CD14-positive monocyte (primary cell): ENCODE measurements at regions of chr21 and their contacts with region 1.

Region 1: GRCh38 chr21:32770871-32771523 is 558 bp downstream of the PAXBP1 start:
- DNase-seq: peak; percentile 51 to 71 (median 53)
- H3K4me3 ChIP-seq: peak overlapping the region; percentile 43 to 88 (median 86)
- H3K4me3 Mint-ChIP-seq: peak overlapping the region; percentile 98 to 100
- H3K27ac ChIP-seq: peak overlapping the region; percentile 89 to 91
- H3K27ac Mint-ChIP-seq: peak overlapping the region; percentile 89 to 98 (median 95)
- H3K4me1 ChIP-seq: peaks cover 24 to 31% of the 10 kb centered on the region in 2 donors
- H3K4me1 Mint-ChIP-seq: peaks cover 44% of the 10 kb centered on the region
- H3K27me3 ChIP-seq: no peaks in the 10 kb centered on the region
- H3K27me3 Mint-ChIP-seq: peaks cover 0 to 7% (median 5%) of the 10 kb centered on the region in 3 donors
- CTCF ChIP-seq: no peak

Region 2: DNA sequence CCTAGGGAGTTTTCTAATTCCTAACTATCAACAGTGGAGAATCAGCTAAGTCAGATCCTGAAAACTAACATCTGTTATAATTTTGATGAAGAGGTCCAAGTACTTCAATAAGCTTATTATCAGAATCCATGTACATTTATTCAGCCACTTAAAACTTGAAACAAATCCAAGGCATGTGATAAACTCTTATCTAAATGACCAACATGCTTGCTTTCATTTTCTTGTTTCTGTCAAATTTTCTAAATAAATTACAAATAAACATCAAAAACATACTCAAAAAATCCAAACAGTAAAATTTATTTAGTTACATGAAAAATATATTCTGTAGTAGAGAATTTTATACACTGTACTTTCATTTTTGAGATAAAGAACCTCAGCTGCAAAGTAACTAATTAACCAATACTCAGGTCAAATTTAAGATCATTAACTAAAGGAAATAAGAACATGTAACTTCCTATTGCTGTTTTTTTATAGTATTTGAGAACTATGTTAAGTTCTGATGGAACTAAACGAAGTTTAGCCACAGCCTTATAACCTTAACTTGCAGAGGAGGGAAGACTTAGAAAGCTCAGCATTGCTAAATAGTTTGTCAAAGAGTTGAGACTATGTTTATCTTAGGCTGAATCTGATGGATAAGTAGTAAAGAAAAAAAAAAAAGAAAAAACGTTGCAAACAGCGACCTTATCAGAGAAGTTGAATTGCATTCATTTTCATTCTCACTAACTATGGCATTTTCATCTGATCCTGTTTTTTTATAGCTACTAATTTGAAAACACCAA is 88.1 kb before region 1 on chr21:
- intact Hi-C with region 1: no loop called
- DNase-seq: no peak
- H3K4me3 ChIP-seq: no peak overlapping the region
- H3K4me3 Mint-ChIP-seq: no peak overlapping the region
- H3K27ac ChIP-seq: no peak overlapping the region
- H3K27ac Mint-ChIP-seq: no peak overlapping the region
- H3K4me1 ChIP-seq: no peaks in the 10 kb centered on the region
- H3K4me1 Mint-ChIP-seq: no peaks in the 10 kb centered on the region
- H3K27me3 ChIP-seq: no peaks in the 10 kb centered on the region
- H3K27me3 Mint-ChIP-seq: no peaks in the 10 kb centered on the region
- CTCF ChIP-seq: no peak

Region 3: DNA sequence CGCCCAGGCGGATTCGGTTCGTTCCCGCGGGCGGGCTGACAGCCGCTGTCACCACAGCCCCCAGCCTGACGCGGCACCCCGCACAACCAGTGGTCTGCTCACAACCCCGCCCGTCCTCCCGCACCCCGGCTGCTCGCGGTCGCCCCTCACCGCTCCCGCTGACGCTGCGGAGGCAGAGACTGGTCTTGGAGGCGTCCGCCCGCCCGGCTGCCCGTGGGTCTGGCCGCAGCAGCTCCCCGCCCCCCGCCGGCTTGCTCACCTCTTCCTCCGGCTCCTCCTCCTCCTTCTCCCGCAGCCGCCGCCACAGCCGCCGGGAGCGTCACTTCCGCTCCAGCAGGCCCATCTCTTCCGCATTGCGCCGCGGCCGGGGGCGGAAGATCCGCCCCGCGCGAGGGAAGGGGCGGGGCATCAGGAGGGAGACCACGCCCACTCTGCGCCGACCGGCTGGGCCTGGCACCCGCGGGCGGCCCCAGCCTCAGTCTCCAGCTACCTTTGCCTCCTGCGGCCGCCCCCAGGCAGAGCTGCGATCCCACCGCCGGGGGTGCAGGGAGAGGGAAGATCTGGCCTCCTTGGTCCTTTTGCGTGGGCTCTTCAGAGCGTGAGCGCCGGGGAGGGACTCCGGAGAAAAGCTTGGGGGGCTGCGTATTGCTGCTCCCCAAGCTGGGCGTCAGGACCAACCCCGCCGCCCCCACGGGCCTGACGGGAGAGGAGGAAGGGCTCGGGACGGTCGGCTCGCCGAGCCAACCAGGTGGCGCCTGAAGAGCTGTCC is 43.1 kb before region 1 on chr21 and contains the start of gene SYNJ1:
- intact Hi-C with region 1: loop called (anchors 5 kb)
- DNase-seq: peak; percentile 91 to 97 (median 95)
- H3K4me3 ChIP-seq: peak within 1 kb of the TSS; percentile 88 to 99 (median 97)
- H3K4me3 Mint-ChIP-seq: peak within 1 kb of the TSS; percentile 99
- H3K27ac ChIP-seq: peak within 1 kb of the TSS; percentile 92 to 98
- H3K27ac Mint-ChIP-seq: peak within 1 kb of the TSS; percentile 94 to 99 (median 98)
- H3K4me1 ChIP-seq: peaks cover 25 to 27% of the 10 kb centered on the region in 2 donors
- H3K4me1 Mint-ChIP-seq: peaks cover 40% of the 10 kb centered on the region
- H3K27me3 ChIP-seq: no peaks in the 10 kb centered on the region
- H3K27me3 Mint-ChIP-seq: peaks cover 0 to 2% (median 0%) of the 10 kb centered on the region in 3 donors
- CTCF ChIP-seq: no peak
- polyA plus RNA-seq, gene SYNJ1: 4.0 to 16.5 (median 8.1) TPM

Region 4: GRCh38 chr21:33278721-33279120 is 507.7 kb after region 1 on chr21:
- intact Hi-C with region 1: no loop called
- DNase-seq: no peak
- H3K4me3 ChIP-seq: no peak overlapping the region
- H3K4me3 Mint-ChIP-seq: no peak overlapping the region
- H3K27ac ChIP-seq: peak overlapping the region in 1 of 2 donors; percentile 29
- H3K27ac Mint-ChIP-seq: no peak overlapping the region
- H3K4me1 ChIP-seq: no peaks in the 10 kb centered on the region
- H3K4me1 Mint-ChIP-seq: no peaks in the 10 kb centered on the region
- H3K27me3 ChIP-seq: no peaks in the 10 kb centered on the region
- H3K27me3 Mint-ChIP-seq: no peaks in the 10 kb centered on the region
- CTCF ChIP-seq: no peak